Head of caudate nucleus (tissue), 42 donors: ENCODE measurements at regions of chr5 and their contacts with region 1.

Region 1: DNA sequence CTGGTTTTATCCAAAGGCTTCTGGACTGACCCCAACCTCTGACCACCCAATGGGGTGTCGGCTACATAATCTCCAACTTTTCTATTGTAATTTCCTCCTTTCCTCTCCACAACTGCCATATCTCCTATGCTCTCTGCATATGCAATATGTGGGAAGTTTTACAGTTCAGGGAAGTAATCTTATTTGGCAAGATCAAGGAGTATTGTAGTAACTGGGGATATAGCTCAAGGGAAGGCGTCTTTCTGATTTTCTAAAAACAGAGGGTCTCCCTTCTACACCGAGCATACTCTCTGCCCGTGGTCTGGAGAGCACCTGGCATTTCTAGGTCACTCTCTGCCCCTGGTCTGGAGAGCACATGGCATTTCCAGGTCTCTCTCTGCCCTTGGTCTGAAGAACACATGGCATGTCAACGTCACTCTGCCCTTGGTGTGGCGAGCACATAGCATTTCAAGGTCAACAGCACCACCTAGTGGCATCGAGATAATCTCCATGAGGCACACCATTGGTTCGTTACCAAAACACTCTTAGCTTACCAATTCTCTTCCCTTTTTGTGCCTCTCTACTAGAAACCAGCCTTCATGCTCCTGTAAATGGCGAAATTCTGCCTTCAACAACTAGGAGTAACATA is 616.4 kb upstream of the NUDT12 start:
- DNase-seq: peak in 38 of 42 donors; percentile 6 to 88 (median 56)

Region 2: DNA sequence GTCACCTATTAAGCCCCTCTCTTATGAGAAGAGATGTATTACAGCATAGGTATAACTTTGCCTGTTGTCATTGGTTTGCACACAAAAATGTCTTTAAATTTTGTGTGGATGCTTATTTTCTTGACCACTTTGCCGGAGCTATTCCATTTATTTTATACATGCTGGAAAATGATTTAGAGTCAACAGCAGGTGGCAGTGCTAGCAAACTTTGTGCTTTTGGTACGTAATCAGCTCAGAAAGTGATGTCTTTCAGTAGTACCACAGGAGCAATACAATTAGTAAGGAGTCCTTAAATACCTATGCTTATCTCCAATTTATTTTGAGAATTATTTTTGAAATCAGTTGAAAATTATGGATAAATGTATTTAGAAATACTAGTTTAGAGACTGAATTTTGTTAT is 596.6 kb before region 1 on chr5:
- intact Hi-C with region 1: loop called (anchors 5 kb)
- DNase-seq: peak in 33 of 42 donors; percentile 19 to 76 (median 52)

Region 3: DNA sequence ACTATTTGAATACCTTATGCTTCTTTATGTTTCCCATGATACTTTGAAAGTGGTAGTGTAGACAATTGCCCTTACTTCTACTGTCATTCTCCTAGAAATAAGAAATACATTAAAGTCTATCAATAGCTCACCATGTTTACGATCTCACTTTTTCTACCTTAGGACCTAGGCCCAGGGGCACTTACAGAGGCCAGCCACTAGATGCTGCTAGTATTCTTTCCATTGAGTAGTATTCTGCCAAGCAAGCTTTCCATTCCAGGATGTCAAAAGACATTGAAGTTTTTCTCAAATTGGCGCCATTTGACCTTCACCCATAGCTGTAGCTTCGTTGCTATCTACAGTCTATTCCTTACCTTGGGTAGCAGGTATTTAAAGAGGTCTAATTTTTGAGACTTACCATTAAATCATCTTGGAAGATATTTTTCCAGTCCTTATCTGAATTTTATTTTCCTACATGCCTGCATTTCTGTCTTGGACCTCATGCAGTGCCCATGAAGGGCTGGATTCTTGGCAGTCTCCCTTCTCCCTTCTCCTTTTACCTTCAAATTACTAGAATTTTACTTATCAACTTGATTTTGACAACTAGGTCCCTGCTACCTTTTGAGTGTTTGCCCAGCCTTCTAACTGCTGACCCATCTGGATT is 370.4 kb before region 1 on chr5:
- intact Hi-C with region 1: loop called (anchors 10 kb)
- DNase-seq: peak in 40 of 42 donors; percentile 8 to 83 (median 56)

Region 4: DNA sequence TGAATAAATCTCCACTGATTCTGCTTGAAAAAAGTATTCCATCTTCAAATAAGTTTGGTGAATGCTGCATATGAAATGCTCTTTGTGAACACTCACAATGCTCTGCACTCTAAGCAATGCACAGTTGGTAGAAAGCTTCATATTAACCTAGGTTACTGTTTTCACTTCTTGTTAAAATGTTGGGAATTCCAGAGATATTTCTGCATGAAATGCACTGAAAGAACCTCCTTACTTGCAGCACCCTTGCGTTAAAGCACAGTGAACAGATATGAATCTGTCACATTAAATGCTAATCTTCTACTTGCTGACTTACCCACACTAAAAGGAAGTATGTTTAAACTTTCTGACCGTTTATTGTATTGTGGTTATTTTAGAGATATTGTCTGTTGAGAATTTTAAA is 32.3 kb before region 1 on chr5:
- intact Hi-C with region 1: no loop called
- DNase-seq: no peak